ENCODE measurements at regions of chr3 and their contacts with region 1.

Region 1: DNA sequence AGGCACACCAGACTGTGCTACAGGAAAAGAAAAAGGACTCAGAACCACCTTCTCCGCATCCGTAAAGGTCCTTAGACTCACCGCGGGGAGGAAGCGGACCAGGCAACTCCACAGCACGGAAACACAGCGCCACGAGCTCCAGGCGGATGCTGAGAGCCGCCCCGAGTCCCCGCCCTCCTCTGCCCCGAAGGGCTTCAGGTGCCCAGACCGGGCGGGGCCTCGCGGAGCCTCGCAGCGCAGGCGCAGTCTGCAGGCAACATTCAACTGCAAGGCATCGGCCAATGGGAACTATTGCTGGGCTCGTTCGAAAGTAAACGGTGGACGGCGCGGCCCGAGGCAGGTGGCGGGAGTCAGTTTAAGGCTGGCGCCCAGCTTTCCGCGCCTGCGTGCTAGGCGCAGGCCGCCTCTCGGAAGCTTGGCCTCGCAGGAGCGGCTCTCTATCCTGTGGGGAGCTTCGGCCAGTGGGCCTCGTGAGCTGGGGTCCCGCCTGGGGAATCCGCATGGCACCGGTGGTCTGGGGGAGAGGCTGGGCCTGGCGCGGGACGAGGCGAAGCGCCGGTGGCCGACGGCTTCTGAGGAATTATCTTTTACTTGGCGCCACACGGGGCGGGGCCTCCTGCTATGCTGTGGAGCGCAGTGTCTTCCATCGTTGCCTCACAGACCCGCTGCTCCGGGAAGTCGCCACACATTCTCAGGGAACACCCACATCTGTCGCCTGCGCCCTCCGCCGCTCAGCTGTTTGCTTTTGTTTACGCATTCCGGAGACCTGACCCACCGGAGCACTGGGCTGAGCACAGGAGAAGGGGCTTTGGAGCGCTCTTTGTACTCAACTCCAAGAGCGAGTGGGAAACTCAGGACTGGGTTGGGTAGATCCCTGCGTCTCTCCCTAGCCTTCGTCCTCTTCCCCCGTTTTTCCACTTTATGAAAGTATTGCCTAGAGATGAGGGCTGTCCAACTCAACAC is at the start of gene TRIM59:
- DNase-seq: peak; percentile 97
- ATAC-seq: peak; percentile 95
- H3K4me3 Mint-ChIP-seq: peak within 1 kb of the TSS; percentile 97
- H3K27ac Mint-ChIP-seq: peak within 1 kb of the TSS; percentile 99
- H3K4me1 Mint-ChIP-seq: peaks cover 23% of the 10 kb centered on the region
- H3K27me3 Mint-ChIP-seq: peaks cover 2% of the 10 kb centered on the region
- total RNA-seq, gene TRIM59: 40.7 to 43.5 TPM

Region 2: DNA sequence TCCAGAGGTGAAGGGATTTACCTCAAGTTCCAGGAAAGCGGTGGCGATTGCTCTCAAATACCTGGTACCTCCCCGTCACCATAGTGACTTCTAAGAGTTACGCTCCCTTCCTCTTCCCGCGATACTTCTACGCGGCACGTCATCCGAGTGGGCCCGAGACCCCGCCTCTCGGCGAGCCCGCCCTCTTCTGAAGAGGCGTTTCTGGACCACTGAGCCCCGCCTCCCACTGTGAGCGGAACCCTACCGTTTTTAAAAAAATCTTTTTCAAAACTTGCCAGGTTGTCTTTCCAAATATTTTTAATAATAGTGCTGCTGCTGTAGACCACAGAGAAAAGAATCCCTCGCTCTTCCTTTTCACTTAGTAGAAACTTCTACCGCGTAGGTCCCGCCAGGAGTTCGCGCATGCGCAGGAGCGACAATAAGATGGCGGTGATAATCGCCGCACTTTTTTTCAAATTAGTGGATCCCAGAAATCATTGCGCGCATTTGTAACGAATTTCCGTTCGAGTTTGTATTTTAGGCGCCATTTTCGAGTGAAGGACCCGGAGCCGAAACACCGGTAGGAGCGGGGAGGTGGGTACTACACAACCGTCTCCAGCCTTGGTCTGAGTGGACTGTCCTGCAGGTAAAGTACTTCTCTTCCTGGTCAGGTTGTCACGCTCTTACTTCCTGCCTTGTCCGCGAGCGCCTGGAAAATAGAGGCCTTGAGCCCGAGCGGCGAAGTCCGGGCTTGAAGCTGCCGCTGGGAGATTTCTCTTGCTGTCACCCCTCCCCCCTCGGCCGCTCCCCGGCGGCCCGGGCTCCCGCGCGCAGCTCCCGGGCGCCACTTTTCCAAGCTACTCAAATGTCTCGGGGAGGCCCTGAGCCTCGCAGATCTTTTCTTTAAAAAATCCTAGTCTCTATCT is 50.5 kb before region 1 on chr3 and contains the starts of genes IFT80 and SMC4:
- POLR2A ChIA-PET with region 1: interaction called, 86 read pairs
- DNase-seq: peak; percentile 93
- ATAC-seq: peak; percentile 89
- H3K4me3 Mint-ChIP-seq: peak within 1 kb of the TSS; percentile 92
- H3K27ac Mint-ChIP-seq: peak within 1 kb of the TSS; percentile 93
- H3K4me1 Mint-ChIP-seq: peaks cover 40% of the 10 kb centered on the region
- H3K27me3 Mint-ChIP-seq: no peaks in the 10 kb centered on the region
- total RNA-seq, gene IFT80: 27.9 to 29.2 TPM
- total RNA-seq, gene SMC4: 187 to 189 TPM

Region 3: DNA sequence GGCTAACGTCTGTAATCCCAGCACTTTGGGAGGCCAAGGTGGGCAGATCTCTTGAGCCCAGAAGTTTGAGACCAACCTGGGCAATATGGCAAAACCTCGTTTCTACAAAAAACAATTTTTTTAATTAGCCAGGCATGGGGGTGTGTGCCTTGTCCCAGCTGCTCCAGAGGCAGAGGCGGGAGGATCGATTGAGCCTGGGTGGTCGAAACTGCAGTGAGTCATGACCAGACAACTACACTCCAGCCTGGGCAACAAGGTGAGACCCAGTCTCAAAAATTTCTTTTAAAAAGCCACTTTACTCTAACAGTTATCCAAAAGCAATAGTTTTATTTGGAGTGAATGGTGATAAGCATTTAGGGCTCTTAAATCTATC is 12.8 kb before region 1 on chr3:
- POLR2A ChIA-PET with region 1: interaction called, 19 read pairs
- DNase-seq: no peak
- ATAC-seq: no peak
- H3K4me3 Mint-ChIP-seq: peak overlapping the region; percentile 45
- H3K27ac Mint-ChIP-seq: peak overlapping the region; percentile 21
- H3K4me1 Mint-ChIP-seq: peaks cover 28% of the 10 kb centered on the region
- H3K27me3 Mint-ChIP-seq: no peaks in the 10 kb centered on the region

Region 4: GRCh38 chr3:160460033-160460432 is 10.1 kb after region 1 on chr3:
- POLR2A ChIA-PET with region 1: interaction called, 12 read pairs
- DNase-seq: no peak
- ATAC-seq: no peak
- H3K4me3 Mint-ChIP-seq: no peak overlapping the region
- H3K27ac Mint-ChIP-seq: no peak overlapping the region
- H3K4me1 Mint-ChIP-seq: no peaks in the 10 kb centered on the region
- H3K27me3 Mint-ChIP-seq: peaks cover 34% of the 10 kb centered on the region

Region 5: GRCh38 chr3:160486459-160486869 is 36.5 kb after region 1 on chr3:
- POLR2A ChIA-PET with region 1: no interaction called
- DNase-seq: no peak
- ATAC-seq: no peak
- H3K4me3 Mint-ChIP-seq: no peak overlapping the region
- H3K27ac Mint-ChIP-seq: no peak overlapping the region
- H3K4me1 Mint-ChIP-seq: peaks cover 4% of the 10 kb centered on the region
- H3K27me3 Mint-ChIP-seq: peaks cover 4% of the 10 kb centered on the region

Region 6: GRCh38 chr3:160565442-160566403 is 115.8 kb after region 1 on chr3 and contains the start of gene KPNA4:
- POLR2A ChIA-PET with region 1: interaction called, 13 read pairs
- DNase-seq: peak; percentile 96
- ATAC-seq: peak; percentile 90
- H3K4me3 Mint-ChIP-seq: peak within 1 kb of the TSS; percentile 96
- H3K27ac Mint-ChIP-seq: peak within 1 kb of the TSS; percentile 92
- H3K4me1 Mint-ChIP-seq: peaks cover 41% of the 10 kb centered on the region
- H3K27me3 Mint-ChIP-seq: no peaks in the 10 kb centered on the region
- total RNA-seq, gene KPNA4: 36.0 to 36.7 TPM